ENCODE measurements at regions of chr10 and their contacts with region 1.

Region 1: GRCh38 chr10:13787015-13787421 is 200.3 kb downstream of the PRPF18 start:
- DNase-seq: peak; percentile 89
- H3K4me3 Mint-ChIP-seq: no peak overlapping the region
- H3K27ac Mint-ChIP-seq: peak overlapping the region; percentile 82
- H3K4me1 Mint-ChIP-seq: peaks cover 31% of the 10 kb centered on the region
- H3K27me3 Mint-ChIP-seq: no peaks in the 10 kb centered on the region

Region 2: GRCh38 chr10:13659897-13660550 is 127.0 kb before region 1 on chr10:
- CTCF ChIA-PET with region 1: interaction called, 18 read pairs
- POLR2A ChIA-PET with region 1: no interaction called
- intact Hi-C with region 1: no loop called
- DNase-seq: peak; percentile 77
- H3K4me3 Mint-ChIP-seq: no peak overlapping the region
- H3K27ac Mint-ChIP-seq: no peak overlapping the region
- H3K4me1 Mint-ChIP-seq: peaks cover 9% of the 10 kb centered on the region
- H3K27me3 Mint-ChIP-seq: no peaks in the 10 kb centered on the region

Region 3: GRCh38 chr10:13859979-13860654 is 73.1 kb after region 1 on chr10:
- CTCF ChIA-PET with region 1: no interaction called
- POLR2A ChIA-PET with region 1: no interaction called
- intact Hi-C with region 1: no loop called
- DNase-seq: no peak
- H3K4me3 Mint-ChIP-seq: no peak overlapping the region
- H3K27ac Mint-ChIP-seq: no peak overlapping the region
- H3K4me1 Mint-ChIP-seq: peaks cover 5% of the 10 kb centered on the region
- H3K27me3 Mint-ChIP-seq: no peaks in the 10 kb centered on the region

Region 4: DNA sequence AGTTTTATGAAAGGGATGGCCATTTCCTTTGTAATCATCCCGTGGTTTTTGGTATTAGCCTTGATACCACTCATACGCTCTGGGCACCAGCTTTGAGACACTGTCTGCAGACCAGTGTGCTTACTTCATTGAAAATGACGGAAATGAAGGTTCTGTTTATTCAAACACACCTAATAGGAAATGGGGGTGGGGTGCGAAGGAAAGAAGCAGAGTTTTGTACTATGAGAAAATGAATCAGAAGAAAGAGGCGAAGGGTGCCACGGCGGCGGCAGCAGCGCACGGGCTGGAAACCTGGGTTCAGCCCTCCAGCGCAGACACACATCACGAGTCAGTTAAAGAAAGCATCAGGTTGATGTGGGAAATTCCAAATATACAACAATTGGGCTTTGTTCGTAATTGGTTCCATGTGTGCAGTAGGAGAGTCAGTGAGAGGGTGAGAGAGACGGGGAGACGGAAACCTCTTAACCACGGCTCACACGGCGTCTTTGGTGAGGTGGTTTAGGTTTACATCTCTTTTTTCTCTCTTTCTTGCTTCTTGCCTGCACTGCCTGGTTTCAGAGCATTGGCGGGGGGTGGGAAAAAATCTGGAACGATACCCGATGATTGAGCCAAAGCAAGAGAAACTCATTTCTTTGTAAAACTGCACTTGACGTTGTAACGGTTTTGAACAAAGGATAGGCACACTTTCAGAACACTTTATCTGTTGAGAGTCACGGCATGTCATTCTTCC is 222.5 kb after region 1 on chr10:
- CTCF ChIA-PET with region 1: no interaction called
- POLR2A ChIA-PET with region 1: no interaction called
- intact Hi-C with region 1: loop called (anchors 2 kb)
- DNase-seq: peak; percentile 80
- H3K4me3 Mint-ChIP-seq: peak overlapping the region; percentile 81
- H3K27ac Mint-ChIP-seq: peak overlapping the region; percentile 79
- H3K4me1 Mint-ChIP-seq: peaks cover 27% of the 10 kb centered on the region
- H3K27me3 Mint-ChIP-seq: no peaks in the 10 kb centered on the region

Region 5: GRCh38 chr10:14093730-14094484 is 306.9 kb after region 1 on chr10:
- CTCF ChIA-PET with region 1: no interaction called
- POLR2A ChIA-PET with region 1: no interaction called
- intact Hi-C with region 1: loop called (anchors 10 kb)
- DNase-seq: no peak
- H3K4me3 Mint-ChIP-seq: no peak overlapping the region
- H3K27ac Mint-ChIP-seq: no peak overlapping the region
- H3K4me1 Mint-ChIP-seq: no peaks in the 10 kb centered on the region
- H3K27me3 Mint-ChIP-seq: no peaks in the 10 kb centered on the region